Heart left ventricle (tissue), 16 donors: ENCODE measurements at regions of chr20 and their contacts with region 1.

Region 1: GRCh38 chr20:37901654-37902503 is 1.0 kb upstream of the VSTM2L start:
- DNase-seq: peak in 1 of 5 donors; percentile 49
- ATAC-seq: peak; percentile 43 to 78 (median 64)
- H3K4me3 ChIP-seq: peak overlapping the region in 8 of 12 donors; percentile 41 to 54 (median 48)
- H3K27ac ChIP-seq: no peak overlapping the region
- H3K4me1 ChIP-seq: peaks cover 0 to 21% (median 10%) of the 10 kb centered on the region in 12 donors
- H3K27me3 ChIP-seq: peaks cover 17 to 65% (median 30%) of the 10 kb centered on the region in 9 donors
- CTCF ChIP-seq: peak in 11 of 12 donors; percentile 10 to 49 (median 31)
- POLR2A ChIP-seq: no peak

Region 2: GRCh38 chr20:37651932-37652331 is 249.9 kb before region 1 on chr20:
- intact Hi-C with region 1: loop called in 1 of 10 experiments (anchors 10 kb)
- DNase-seq: peak in 4 of 5 donors; percentile 37 to 58 (median 50)
- ATAC-seq: peak; percentile 73 to 88 (median 83)
- H3K4me3 ChIP-seq: no peak overlapping the region
- H3K27ac ChIP-seq: no peak overlapping the region
- H3K4me1 ChIP-seq: peaks cover 0 to 13% (median 0%) of the 10 kb centered on the region in 12 donors
- H3K27me3 ChIP-seq: no peaks in the 10 kb centered on the region
- CTCF ChIP-seq: peak; percentile 25 to 58 (median 42)
- POLR2A ChIP-seq: no peak

Region 3: DNA sequence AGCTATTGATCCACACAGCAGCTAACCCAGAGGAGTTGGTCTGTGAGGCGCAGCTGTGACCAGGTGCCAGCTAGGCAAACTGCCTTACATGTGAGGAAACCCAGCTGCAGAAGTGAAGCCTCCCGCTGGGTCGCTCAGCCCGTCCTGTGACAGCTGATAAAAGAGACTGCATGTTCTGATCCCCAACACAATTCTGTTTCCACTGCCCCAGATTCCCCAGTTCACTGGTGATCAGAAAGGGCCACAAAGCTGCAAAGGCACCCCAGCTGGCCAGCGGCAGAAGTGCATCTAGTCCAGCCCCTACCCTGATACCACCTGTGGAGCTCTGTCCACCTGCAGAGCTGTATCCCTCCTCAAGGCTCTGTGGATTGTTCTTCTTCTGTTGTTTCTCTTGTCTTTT is 143.5 kb before region 1 on chr20:
- intact Hi-C with region 1: loop called in 3 of 10 experiments (anchors 5 to 10 kb)
- DNase-seq: no peak
- ATAC-seq: peak in 3 of 4 donors; percentile 10 to 60 (median 33)
- H3K4me3 ChIP-seq: no peak overlapping the region
- H3K27ac ChIP-seq: no peak overlapping the region
- H3K4me1 ChIP-seq: peaks cover 0 to 4% (median 0%) of the 10 kb centered on the region in 12 donors
- H3K27me3 ChIP-seq: no peaks in the 10 kb centered on the region
- CTCF ChIP-seq: peak in 1 of 12 donors; percentile 11
- POLR2A ChIP-seq: no peak

Region 4: DNA sequence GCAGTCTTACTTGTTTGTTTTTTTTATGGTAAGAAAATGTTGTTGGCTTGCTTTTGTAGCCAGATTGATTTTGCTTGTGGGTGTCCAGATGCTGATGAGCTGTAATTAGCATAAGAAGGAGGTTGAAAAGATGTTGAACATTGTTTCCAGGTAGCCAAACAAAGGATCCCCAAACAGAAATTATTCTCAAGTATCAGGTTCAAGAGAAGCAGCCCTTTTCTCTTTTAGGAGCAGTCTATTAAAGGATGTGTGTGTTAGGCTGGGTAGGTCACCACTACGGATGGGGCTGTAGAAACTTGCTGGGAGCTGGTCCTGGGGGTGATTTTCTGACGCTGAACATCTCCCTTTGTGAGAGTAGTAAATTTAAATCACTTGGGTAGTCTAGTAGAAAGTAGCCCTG is 85.9 kb before region 1 on chr20:
- intact Hi-C with region 1: no loop called
- DNase-seq: no peak
- ATAC-seq: no peak
- H3K4me3 ChIP-seq: no peak overlapping the region
- H3K27ac ChIP-seq: no peak overlapping the region
- H3K4me1 ChIP-seq: peaks cover 0 to 6% (median 0%) of the 10 kb centered on the region in 12 donors
- H3K27me3 ChIP-seq: no peaks in the 10 kb centered on the region
- CTCF ChIP-seq: no peak
- POLR2A ChIP-seq: no peak